ENCODE measurements at regions of chr3 and their contacts with region 1.

Region 1: GRCh38 chr3:31936420-31937060 is 44.5 kb downstream of the OSBPL10 start:
- DNase-seq: no peak
- H3K4me3 ChIP-seq: no peak overlapping the region
- H3K27ac ChIP-seq: no peak overlapping the region
- H3K4me1 ChIP-seq: peaks cover 6% of the 10 kb centered on the region; the same call in 1 of the 2 replicates
- H3K27me3 ChIP-seq: no peaks in the 10 kb centered on the region
- CTCF ChIP-seq: no peak

Region 2: GRCh38 chr3:31858439-31858838 is 78.1 kb before region 1 on chr3:
- CTCF ChIA-PET with region 1: interaction called, 14 read pairs
- POLR2A ChIA-PET with region 1: no interaction called
- intact Hi-C with region 1: no loop called
- DNase-seq: peak in 1 of 2 experiments; percentile 6
- H3K4me3 ChIP-seq: no peak overlapping the region
- H3K27ac ChIP-seq: no peak overlapping the region
- H3K4me1 ChIP-seq: no peaks in the 10 kb centered on the region
- H3K27me3 ChIP-seq: no peaks in the 10 kb centered on the region
- CTCF ChIP-seq: no peak

Measured in PC-9 (cell line).